Breast epithelium (tissue), 4 donors: ENCODE measurements at regions of chr3 and their contacts with region 1.

Region 1: DNA sequence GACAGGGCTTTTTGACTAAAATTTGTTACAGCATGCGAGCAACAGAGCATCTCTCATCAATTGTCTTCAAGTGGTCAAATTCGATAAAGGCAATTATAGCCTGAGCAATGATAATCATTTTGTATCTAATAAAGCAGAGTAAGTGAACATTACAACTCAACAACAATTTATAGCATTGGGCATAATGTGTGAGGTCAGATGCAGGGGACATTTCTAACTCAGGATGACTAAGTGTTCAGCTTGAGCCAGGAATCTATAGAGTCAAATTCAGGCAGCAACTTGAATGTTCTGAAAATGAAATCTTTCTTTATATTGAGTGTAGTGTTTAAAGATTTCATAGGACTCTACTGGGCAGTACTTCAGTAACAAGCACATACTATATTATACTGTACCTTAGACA is 1226.0 kb downstream of the ZPLD1 start:
- DNase-seq: no peak
- H3K4me3 ChIP-seq: no peak overlapping the region
- H3K27ac ChIP-seq: no peak overlapping the region
- H3K4me1 ChIP-seq: no peaks in the 10 kb centered on the region
- H3K27me3 ChIP-seq: no peaks in the 10 kb centered on the region
- CTCF ChIP-seq: no peak
- POLR2A ChIP-seq: no peak

Region 2: DNA sequence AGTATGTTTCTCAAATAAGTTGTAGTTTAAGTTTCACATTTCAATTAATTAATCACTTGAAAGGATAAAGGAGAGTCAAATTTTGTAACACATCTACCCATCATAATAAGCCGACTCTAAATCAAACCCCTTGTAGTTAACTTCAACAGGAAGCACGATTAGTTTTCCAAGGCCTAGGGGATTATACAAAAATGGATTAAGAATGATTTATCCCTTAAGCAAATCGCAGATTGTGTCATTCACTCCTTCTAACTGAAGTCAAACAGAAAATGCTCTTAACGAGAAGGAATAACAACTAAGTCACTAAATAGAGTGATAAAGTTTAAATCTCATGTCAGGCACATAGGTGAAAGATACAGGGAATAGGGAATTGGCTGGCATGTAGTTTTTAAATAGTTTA is 433.2 kb before region 1 on chr3:
- intact Hi-C with region 1: loop called (anchors 10 kb)
- DNase-seq: no peak
- H3K4me3 ChIP-seq: no peak overlapping the region
- H3K27ac ChIP-seq: no peak overlapping the region
- H3K4me1 ChIP-seq: no peaks in the 10 kb centered on the region
- H3K27me3 ChIP-seq: no peaks in the 10 kb centered on the region
- CTCF ChIP-seq: no peak
- POLR2A ChIP-seq: no peak

Region 3: DNA sequence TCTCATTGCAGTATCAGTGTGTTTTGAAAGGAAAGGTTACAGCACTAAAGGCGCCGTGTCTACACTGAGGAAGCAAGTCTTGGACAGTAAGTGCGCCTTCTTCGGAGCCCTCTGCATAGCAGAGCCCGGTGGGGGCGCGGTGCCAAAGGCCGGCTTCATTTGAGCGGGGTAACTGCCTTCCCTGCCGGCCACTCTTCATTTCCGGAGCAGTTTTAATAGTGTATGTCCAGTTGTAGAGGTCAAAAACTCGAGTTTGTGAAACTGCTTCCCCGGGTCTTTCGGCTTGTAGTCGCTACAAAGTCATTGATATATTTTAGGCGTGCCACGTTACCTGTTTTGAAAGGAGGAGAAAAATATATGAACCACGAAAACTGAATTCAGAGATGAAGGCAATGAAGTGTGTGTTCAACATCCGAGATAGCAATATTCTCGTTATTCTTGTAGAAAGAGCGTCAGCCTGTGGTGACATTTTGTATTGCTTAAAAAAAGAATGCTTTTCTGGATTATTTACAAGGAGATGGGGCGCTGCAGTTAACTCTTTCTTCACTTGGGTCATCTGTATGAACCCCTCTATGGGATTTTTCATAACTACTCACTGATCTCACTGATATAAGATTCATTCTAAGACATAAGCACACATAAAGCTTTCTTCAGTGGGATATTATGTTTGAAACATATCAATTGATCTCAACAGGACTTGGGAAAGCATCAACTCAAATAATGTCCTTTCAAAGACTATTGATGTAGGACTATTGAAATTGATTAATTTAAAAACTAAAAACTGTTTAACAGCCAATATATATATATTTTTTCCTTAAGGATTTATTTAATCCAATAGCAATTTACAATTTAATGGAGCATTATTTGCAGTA is 1708.9 kb after region 1 on chr3:
- intact Hi-C with region 1: no loop called
- DNase-seq: peak; percentile 56 to 66
- H3K4me3 ChIP-seq: peak overlapping the region; percentile 72 to 81 (median 74)
- H3K27ac ChIP-seq: peak overlapping the region; percentile 90 to 95
- H3K4me1 ChIP-seq: no peaks in the 10 kb centered on the region
- H3K27me3 ChIP-seq: no peaks in the 10 kb centered on the region
- CTCF ChIP-seq: peak; percentile 49 to 54 (median 52)
- POLR2A ChIP-seq: no peak